Right lobe of liver (tissue), 6 donors: ENCODE measurements at regions of chr1 and their contacts with region 1.

Region 1: GRCh38 chr1:46179138-46180081 is 3.1 kb upstream of the P3R3URF start:
- DNase-seq: peak in 2 of 3 donors; percentile 71 to 79
- ATAC-seq: peak; percentile 73 to 81 (median 77)
- H3K4me3 ChIP-seq: no peak overlapping the region
- H3K27ac ChIP-seq: no peak overlapping the region
- H3K4me1 ChIP-seq: peaks cover 0 to 19% (median 5%) of the 10 kb centered on the region in 4 donors
- H3K27me3 ChIP-seq: no peaks in the 10 kb centered on the region
- CTCF ChIP-seq: peak; percentile 88 to 92 (median 90)
- POLR2A ChIP-seq: no peak

Region 2: DNA sequence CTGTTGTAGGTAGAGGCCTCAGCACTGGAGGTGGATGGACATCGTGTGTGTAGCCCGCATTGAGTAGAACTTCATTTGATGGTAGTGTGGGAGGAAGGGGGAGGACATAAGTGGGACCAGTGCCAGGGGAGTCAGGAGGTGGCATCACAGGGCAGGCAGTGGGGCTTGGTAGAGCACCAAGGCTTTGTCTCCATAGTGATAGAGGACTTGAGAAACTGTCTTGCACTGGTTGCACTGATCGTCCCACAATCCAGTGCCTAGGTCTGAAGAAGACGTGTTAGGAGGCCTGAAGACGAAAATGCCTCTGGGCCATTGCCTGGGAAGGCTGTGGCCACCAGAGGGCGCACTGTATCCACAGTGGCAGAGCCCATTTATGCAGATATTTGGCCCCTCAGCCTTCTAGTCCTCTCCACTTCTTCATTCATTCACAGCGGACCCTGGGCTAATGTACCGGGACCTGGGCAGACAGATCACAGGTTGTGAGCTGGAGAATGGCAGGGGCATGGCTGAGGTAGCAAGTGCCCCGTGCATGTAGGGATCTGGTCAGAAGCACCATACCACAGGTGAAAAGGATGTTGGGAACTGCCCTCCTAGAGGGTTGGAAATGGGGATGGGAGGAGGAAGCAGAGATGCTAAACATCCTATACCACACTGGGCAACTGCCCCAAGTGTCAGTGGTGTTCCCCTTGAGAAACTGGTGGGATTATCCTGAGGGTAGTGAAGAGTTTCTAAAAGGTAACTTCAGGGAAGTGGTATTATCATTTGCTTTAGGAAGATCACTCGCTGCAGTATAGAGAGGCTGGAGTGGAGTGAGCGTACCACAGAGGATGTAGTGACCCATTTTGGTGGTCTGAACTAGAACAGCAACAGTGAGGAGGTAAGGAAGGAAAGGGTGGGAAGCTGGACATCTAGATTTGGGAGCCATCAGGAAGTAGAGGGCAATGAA is 142.2 kb before region 1 on chr1:
- intact Hi-C with region 1: loop called (anchors 5 kb)
- DNase-seq: peak; percentile 83 to 85 (median 84)
- ATAC-seq: peak; percentile 82 to 94 (median 85)
- H3K4me3 ChIP-seq: no peak overlapping the region
- H3K27ac ChIP-seq: no peak overlapping the region
- H3K4me1 ChIP-seq: peaks cover 0 to 5% (median 0%) of the 10 kb centered on the region in 4 donors
- H3K27me3 ChIP-seq: no peaks in the 10 kb centered on the region
- CTCF ChIP-seq: peak; percentile 94 to 99 (median 99)
- POLR2A ChIP-seq: no peak